Endothelial cell of umbilical vein (primary cell): ENCODE measurements at regions of chr2 and their contacts with region 1.

Region 1: GRCh38 chr2:227766373-227766883 is 20.7 kb downstream of the SCYGR8 start:
- DNase-seq: peak; percentile 85
- H3K4me3 ChIP-seq: no peak overlapping the region
- H3K27ac ChIP-seq: no peak overlapping the region
- H3K4me1 ChIP-seq: peaks cover 7% of the 10 kb centered on the region
- H3K27me3 ChIP-seq: no peaks in the 10 kb centered on the region
- CTCF ChIP-seq: peak; percentile 75 to 79
- POLR2A ChIP-seq: no peak

Region 2: DNA sequence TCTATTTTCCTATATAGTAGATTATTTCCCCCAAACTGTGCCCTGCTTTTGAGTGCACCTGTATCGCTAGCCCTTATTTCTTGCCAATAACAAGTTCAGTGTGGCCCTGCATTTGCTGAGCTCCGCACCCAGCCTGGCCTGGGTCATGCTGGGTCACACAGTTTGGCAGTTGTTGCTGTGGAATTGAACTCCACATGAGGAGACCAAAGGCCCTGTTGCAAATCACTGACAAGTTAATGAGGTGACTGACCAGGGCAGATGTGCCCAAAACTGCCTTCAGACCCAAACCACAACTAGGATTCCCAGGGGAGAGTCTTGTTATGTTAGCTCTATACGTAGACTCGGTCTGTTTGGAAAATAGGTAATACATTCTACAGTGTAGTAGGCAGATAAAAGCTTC is 633.4 kb before region 1 on chr2:
- CTCF ChIA-PET with region 1: interaction called, 10 read pairs
- POLR2A ChIA-PET with region 1: no interaction called
- dilution Hi-C with region 1: no loop called
- intact Hi-C with region 1: loop called (anchors 1 kb)
- DNase-seq: no peak
- H3K4me3 ChIP-seq: no peak overlapping the region
- H3K27ac ChIP-seq: no peak overlapping the region
- H3K4me1 ChIP-seq: no peaks in the 10 kb centered on the region
- H3K27me3 ChIP-seq: no peaks in the 10 kb centered on the region
- CTCF ChIP-seq: no peak
- POLR2A ChIP-seq: no peak

Region 3: DNA sequence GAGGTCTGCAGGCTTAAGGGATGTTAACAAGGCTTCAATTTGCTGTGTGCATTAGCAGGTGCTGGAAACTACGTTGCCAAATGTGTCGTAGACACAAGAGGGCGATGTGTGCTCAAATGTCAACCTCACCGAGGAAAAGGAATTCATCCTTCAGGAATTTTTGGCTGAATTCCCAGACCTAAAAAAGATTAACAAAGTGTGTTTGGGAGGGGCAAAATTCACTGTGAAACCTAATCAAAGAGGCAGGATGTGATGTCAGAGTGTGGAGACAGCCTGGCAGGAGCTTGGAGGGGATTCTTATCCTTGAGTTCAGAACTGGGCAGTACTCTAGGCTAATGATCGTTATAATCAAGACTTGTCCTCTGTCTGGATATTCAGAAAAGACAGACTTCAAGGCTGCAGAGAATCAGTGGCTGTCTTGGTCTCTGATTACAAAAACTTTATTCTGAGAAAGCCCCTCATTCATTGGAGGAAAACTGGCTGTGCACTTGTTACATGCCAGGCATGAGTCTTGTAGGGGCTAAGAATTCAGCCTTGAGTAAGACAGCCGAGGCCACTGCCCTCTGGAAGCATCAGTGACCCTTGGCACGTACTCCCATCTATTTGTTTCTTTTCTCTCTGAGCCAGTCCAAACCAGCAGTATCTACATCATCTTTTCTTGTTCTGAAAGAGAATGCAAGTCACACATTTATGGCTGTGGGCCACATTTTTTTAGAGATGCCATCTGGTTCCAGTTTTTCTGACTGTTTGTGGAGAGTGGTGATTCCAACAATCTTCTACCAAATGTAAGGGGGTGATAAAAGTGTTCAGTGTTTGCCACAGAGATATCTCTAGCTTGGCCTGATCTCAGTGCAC is 360.0 kb before region 1 on chr2:
- CTCF ChIA-PET with region 1: interaction called, 139 read pairs
- POLR2A ChIA-PET with region 1: interaction called, 5 read pairs
- dilution Hi-C with region 1: no loop called
- intact Hi-C with region 1: loop called (anchors 1 kb)
- DNase-seq: peak; percentile 96
- H3K4me3 ChIP-seq: no peak overlapping the region
- H3K27ac ChIP-seq: peak overlapping the region; percentile 85
- H3K4me1 ChIP-seq: peaks cover 8% of the 10 kb centered on the region
- H3K27me3 ChIP-seq: no peaks in the 10 kb centered on the region
- CTCF ChIP-seq: peak; percentile 57 to 81
- POLR2A ChIP-seq: peak; percentile 50

Region 4: GRCh38 chr2:227479865-227480475 is 286.5 kb before region 1 on chr2:
- CTCF ChIA-PET with region 1: interaction called, 10 read pairs
- POLR2A ChIA-PET with region 1: no interaction called
- dilution Hi-C with region 1: no loop called
- intact Hi-C with region 1: no loop called
- DNase-seq: peak; percentile 37
- H3K4me3 ChIP-seq: no peak overlapping the region
- H3K27ac ChIP-seq: no peak overlapping the region
- H3K4me1 ChIP-seq: no peaks in the 10 kb centered on the region
- H3K27me3 ChIP-seq: no peaks in the 10 kb centered on the region
- CTCF ChIP-seq: peak in 1 of 2 donors; percentile 7
- POLR2A ChIP-seq: no peak

Region 5: DNA sequence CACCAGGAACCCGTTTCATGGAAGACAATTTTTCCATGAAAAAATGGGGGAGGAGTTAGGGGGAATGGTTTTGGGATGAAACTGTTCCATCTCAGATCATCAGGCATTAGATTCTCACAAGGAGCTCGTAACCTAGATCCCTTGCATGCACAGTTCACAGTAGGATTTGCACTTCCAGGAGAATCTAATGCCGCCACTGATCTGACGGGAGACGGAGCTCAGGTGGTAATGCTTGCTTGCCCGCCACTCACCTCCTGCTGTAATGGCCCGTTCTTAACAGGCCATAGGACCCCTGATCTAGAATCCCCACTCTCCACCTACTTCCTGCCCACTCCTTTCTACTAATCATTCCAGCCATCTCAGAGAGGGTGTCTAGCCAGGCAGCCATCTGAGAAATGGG is 56.5 kb before region 1 on chr2:
- CTCF ChIA-PET with region 1: no interaction called
- POLR2A ChIA-PET with region 1: no interaction called
- dilution Hi-C with region 1: no loop called
- intact Hi-C with region 1: no loop called
- DNase-seq: no peak
- H3K4me3 ChIP-seq: no peak overlapping the region
- H3K27ac ChIP-seq: no peak overlapping the region
- H3K4me1 ChIP-seq: no peaks in the 10 kb centered on the region
- H3K27me3 ChIP-seq: no peaks in the 10 kb centered on the region
- CTCF ChIP-seq: no peak
- POLR2A ChIP-seq: no peak

Region 6: GRCh38 chr2:227744276-227744675 is 22.2 kb before region 1 on chr2:
- CTCF ChIA-PET with region 1: interaction called, 15 read pairs
- POLR2A ChIA-PET with region 1: no interaction called
- dilution Hi-C with region 1: no loop called
- intact Hi-C with region 1: loop called (anchors 2 kb)
- DNase-seq: no peak
- H3K4me3 ChIP-seq: no peak overlapping the region
- H3K27ac ChIP-seq: no peak overlapping the region
- H3K4me1 ChIP-seq: no peaks in the 10 kb centered on the region
- H3K27me3 ChIP-seq: no peaks in the 10 kb centered on the region
- CTCF ChIP-seq: no peak
- POLR2A ChIP-seq: no peak

Region 7: GRCh38 chr2:227890495-227891079 is 124.2 kb after region 1 on chr2:
- CTCF ChIA-PET with region 1: interaction called, 31 read pairs
- POLR2A ChIA-PET with region 1: no interaction called
- dilution Hi-C with region 1: no loop called
- intact Hi-C with region 1: loop called (anchors 2 kb)
- DNase-seq: peak; percentile 58
- H3K4me3 ChIP-seq: no peak overlapping the region
- H3K27ac ChIP-seq: no peak overlapping the region
- H3K4me1 ChIP-seq: no peaks in the 10 kb centered on the region
- H3K27me3 ChIP-seq: no peaks in the 10 kb centered on the region
- CTCF ChIP-seq: peak; percentile 30 to 34
- POLR2A ChIP-seq: no peak